CD8-positive, alpha-beta T cell (primary cell): ENCODE measurements at regions of chr1 and their contacts with region 1.

Region 1: DNA sequence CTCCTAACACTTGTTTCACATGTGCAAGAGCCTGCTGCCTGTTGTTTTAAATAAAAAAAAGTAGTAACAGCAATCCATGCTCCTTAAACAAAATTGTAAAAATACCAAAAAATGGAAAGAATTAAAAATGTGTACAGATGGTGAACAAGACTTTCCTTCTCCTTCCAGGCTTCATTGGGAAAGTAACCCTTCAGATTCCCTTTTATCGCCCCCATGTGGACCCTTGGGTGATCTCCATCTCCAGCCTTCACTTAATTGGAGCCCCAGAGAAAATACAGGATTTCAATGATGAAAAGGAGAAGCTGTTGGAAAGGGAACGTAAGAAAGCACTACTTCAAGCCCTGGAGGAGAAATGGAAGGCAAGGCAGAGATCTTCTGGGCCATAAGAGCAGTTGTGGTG is 14.2 kb downstream of the VPS13D start:
- DNase-seq: peak in 3 of 9 experiments; percentile 7 to 37 (median 30)
- ATAC-seq: no peak
- H3K4me3 ChIP-seq: no peak overlapping the region
- H3K4me3 Mint-ChIP-seq: no peak overlapping the region
- H3K27ac ChIP-seq: no peak overlapping the region
- H3K27ac Mint-ChIP-seq: no peak overlapping the region
- H3K4me1 ChIP-seq: no peaks in the 10 kb centered on the region
- H3K4me1 Mint-ChIP-seq: peaks cover 5% of the 10 kb centered on the region
- H3K27me3 ChIP-seq: no peaks in the 10 kb centered on the region
- H3K27me3 Mint-ChIP-seq: no peaks in the 10 kb centered on the region
- CTCF ChIP-seq: peak; percentile 21

Region 2: DNA sequence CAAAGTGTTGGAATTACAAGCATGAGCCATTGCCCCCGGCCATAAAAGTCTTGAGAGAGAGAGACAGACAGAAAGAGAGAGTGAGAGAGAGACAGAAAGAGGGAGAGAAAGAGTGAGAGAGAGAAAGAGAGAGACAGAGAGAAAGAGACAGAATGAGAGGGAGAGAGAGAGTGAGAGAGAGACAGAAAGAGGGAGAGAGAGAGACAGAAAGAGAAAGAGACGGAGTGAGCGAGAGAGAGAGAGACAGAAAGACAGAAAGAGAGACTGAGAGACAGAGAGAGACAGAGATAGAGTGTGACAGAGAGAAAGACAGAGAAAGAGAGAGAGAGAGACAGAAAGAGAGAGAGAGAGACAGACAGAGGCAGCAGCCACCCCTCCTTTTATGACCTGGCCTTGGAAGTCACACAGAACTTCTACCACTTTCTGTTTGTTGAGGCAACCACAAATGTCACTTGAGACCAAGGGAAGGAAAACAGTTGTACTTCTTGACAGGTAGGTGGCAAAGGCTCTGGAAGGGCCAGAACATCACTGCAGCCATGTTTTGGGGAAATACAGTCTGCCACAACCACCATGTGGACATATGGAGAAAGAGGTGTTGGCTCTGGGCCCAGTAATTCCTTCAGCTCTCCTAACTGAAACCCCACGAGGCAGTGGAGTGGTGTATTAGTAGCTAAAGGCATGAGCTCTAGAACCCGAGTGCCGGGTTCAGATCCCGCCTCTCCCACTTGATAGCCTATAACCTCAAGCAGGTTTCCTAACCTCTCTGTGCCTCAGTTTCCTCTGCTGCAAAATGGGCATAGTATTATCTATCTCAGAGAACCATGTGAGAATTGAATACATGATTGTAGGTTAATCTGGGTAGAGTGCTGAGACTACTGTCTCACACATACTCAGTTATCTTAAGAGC is 130.4 kb before region 1 on chr1:
- CTCF ChIA-PET with region 1: interaction called, 4 read pairs
- POLR2A ChIA-PET with region 1: no interaction called
- intact Hi-C with region 1: loop called (anchors 1 kb)
- DNase-seq: no peak
- ATAC-seq: no peak
- H3K4me3 ChIP-seq: no peak overlapping the region
- H3K4me3 Mint-ChIP-seq: no peak overlapping the region
- H3K27ac ChIP-seq: no peak overlapping the region
- H3K27ac Mint-ChIP-seq: peak overlapping the region; percentile 0
- H3K4me1 ChIP-seq: no peaks in the 10 kb centered on the region
- H3K4me1 Mint-ChIP-seq: peaks cover 3% of the 10 kb centered on the region
- H3K27me3 ChIP-seq: no peaks in the 10 kb centered on the region
- H3K27me3 Mint-ChIP-seq: no peaks in the 10 kb centered on the region
- CTCF ChIP-seq: no peak

Region 3: DNA sequence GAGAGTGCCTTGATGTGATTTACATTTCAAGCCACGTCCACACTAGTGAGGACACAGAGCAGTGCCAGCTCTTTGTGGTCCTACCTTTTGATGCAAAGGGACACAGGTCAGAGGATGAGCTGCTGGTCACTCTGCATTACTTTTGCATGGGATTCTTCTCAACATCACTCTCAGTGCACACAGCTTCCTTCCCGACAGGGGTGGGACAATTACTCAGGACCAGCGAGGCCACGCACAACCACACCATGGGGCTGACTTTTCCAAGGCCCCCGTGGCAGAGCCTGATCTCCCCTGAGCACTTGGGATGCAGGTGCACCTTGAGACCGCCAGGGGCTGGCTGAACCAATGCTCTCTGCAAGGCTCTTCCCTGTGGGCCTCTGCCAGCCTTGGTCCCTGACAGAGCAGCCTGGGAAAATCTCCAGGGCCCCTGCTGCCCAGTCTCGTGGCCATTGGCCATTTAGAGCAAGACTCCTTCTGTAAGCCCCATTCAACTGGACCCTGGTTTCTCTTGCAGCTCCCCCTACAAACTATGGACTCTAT is 516.2 kb after region 1 on chr1:
- CTCF ChIA-PET with region 1: no interaction called
- POLR2A ChIA-PET with region 1: no interaction called
- intact Hi-C with region 1: no loop called
- DNase-seq: no peak
- ATAC-seq: no peak
- H3K4me3 ChIP-seq: no peak overlapping the region
- H3K4me3 Mint-ChIP-seq: no peak overlapping the region
- H3K27ac ChIP-seq: no peak overlapping the region
- H3K27ac Mint-ChIP-seq: no peak overlapping the region
- H3K4me1 ChIP-seq: no peaks in the 10 kb centered on the region
- H3K4me1 Mint-ChIP-seq: no peaks in the 10 kb centered on the region
- H3K27me3 ChIP-seq: no peaks in the 10 kb centered on the region
- H3K27me3 Mint-ChIP-seq: peaks cover 26% of the 10 kb centered on the region
- CTCF ChIP-seq: no peak